ENCODE measurements at regions of chr11 and their contacts with region 1.

Region 1: GRCh38 chr11:102268329-102269193 is 48.7 kb upstream of the BIRC3 start:
- DNase-seq: no peak
- H3K4me3 ChIP-seq: peak overlapping the region; percentile 31
- CTCF ChIP-seq: peak; percentile 33

Region 2: GRCh38 chr11:102177974-102178631 is 90.5 kb before region 1 on chr11:
- in situ Hi-C with region 1: no loop called
- DNase-seq: peak; percentile 51
- H3K4me3 ChIP-seq: no peak overlapping the region
- CTCF ChIP-seq: no peak

Region 3: GRCh38 chr11:102220728-102221467 is 47.7 kb before region 1 on chr11:
- in situ Hi-C with region 1: no loop called
- DNase-seq: no peak
- H3K4me3 ChIP-seq: no peak overlapping the region
- CTCF ChIP-seq: no peak

Region 4: GRCh38 chr11:102312667-102313066 is 44.1 kb after region 1 on chr11:
- in situ Hi-C with region 1: no loop called
- DNase-seq: no peak
- H3K4me3 ChIP-seq: no peak overlapping the region
- CTCF ChIP-seq: no peak

Region 5: DNA sequence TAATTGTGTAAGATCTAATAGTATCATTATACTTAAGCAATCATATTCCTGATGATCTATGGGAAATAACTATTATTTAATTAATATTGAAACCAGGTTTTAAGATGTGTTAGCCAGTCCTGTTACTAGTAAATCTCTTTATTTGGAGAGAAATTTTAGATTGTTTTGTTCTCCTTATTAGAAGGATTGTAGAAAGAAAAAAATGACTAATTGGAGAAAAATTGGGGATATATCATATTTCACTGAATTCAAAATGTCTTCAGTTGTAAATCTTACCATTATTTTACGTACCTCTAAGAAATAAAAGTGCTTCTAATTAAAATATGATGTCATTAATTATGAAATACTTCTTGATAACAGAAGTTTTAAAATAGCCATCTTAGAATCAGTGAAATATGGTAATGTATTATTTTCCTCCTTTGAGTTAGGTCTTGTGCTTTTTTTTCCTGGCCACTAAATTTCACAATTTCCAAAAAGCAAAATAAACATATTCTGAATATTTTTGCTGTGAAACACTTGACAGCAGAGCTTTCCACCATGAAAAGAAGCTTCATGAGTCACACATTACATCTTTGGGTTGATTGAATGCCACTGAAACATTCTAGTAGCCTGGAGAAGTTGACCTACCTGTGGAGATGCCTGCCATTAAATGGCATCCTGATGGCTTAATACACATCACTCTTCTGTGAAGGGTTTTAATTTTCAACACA is 55.1 kb after region 1 on chr11:
- in situ Hi-C with region 1: loop called (anchors 5 kb)
- DNase-seq: peak; percentile 34
- H3K4me3 ChIP-seq: no peak overlapping the region
- CTCF ChIP-seq: no peak

Region 6: GRCh38 chr11:102546923-102547471 is 278.4 kb after region 1 on chr11:
- in situ Hi-C with region 1: no loop called
- DNase-seq: no peak
- H3K4me3 ChIP-seq: no peak overlapping the region
- CTCF ChIP-seq: no peak